Activated T-helper 1 cell treated with anti-CD3 and anti-CD28 coated beads, Interleukin-12 subunit alpha, Interleukin-12 subunit beta, Interleukin-2, Interleukin-4 antibody, amounts not matched to agents 30 ng/mL and 10 ng/mL and 1 ng/mL, durations not matched to agents 14 hours and 24 hours and 36 hours (primary cell): ENCODE measurements at regions of chr18 and their contacts with region 1.

Region 1: DNA sequence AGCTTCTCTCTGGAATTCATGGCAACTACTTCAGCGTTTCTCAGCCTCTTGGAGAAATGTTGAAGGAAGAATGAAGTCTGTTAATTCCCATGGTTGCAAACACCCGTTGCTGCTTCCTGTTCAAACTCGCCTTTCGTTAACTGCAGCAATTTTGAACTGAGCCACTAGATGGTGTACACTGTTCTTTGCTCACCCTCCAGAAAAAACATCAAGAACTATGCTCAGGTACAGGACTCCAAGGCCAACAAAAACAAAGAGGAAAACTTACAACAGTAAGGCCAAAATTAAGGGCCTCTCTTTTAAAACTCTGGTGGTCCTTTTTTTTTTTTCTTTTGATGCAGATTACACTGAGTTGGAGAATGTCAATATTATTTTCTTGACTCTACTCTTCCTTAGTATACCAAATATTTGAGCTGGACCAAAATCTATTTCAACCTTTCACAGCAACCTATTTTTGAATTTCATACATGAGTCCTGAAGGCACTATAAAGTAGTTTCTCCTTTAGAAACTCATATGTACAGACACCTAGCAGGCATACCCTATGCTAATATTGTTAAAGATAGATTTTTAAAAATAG is 58.2 kb downstream of the KLHL14 start:
- DNase-seq: no peak
- H3K4me3 Mint-ChIP-seq: no peak overlapping the region
- H3K27ac Mint-ChIP-seq: no peak overlapping the region
- H3K4me1 Mint-ChIP-seq: no peaks in the 10 kb centered on the region
- H3K27me3 Mint-ChIP-seq: no peaks in the 10 kb centered on the region

Region 2: GRCh38 chr18:32930695-32931301 is 216.1 kb after region 1 on chr18:
- intact Hi-C with region 1: loop called (anchors 5 kb)
- DNase-seq: no peak
- H3K4me3 Mint-ChIP-seq: no peak overlapping the region
- H3K27ac Mint-ChIP-seq: no peak overlapping the region
- H3K4me1 Mint-ChIP-seq: no peaks in the 10 kb centered on the region
- H3K27me3 Mint-ChIP-seq: no peaks in the 10 kb centered on the region